WTC11 (cell line): ENCODE measurements at regions of chr19 and their contacts with region 1.

Region 1: GRCh38 chr19:54023191-54023590 is 31.8 kb downstream of the CACNG6 start:
- DNase-seq: no peak
- ATAC-seq: no peak
- H3K4me3 Mint-ChIP-seq: no peak overlapping the region
- H3K27ac Mint-ChIP-seq: no peak overlapping the region
- H3K4me1 Mint-ChIP-seq: peaks cover 14% of the 10 kb centered on the region
- H3K27me3 Mint-ChIP-seq: peaks cover 14% of the 10 kb centered on the region
- CTCF ChIP-seq: no peak

Region 2: GRCh38 chr19:53844849-53845246 is 178.3 kb before region 1 on chr19:
- CTCF ChIA-PET with region 1: interaction called, 15 read pairs
- POLR2A ChIA-PET with region 1: no interaction called
- DNase-seq: no peak
- ATAC-seq: no peak
- H3K4me3 Mint-ChIP-seq: no peak overlapping the region
- H3K27ac Mint-ChIP-seq: no peak overlapping the region
- H3K4me1 Mint-ChIP-seq: peaks cover 8% of the 10 kb centered on the region
- H3K27me3 Mint-ChIP-seq: peaks cover 9% of the 10 kb centered on the region; the same call in 1 of the 2 replicates
- CTCF ChIP-seq: no peak

Region 3: DNA sequence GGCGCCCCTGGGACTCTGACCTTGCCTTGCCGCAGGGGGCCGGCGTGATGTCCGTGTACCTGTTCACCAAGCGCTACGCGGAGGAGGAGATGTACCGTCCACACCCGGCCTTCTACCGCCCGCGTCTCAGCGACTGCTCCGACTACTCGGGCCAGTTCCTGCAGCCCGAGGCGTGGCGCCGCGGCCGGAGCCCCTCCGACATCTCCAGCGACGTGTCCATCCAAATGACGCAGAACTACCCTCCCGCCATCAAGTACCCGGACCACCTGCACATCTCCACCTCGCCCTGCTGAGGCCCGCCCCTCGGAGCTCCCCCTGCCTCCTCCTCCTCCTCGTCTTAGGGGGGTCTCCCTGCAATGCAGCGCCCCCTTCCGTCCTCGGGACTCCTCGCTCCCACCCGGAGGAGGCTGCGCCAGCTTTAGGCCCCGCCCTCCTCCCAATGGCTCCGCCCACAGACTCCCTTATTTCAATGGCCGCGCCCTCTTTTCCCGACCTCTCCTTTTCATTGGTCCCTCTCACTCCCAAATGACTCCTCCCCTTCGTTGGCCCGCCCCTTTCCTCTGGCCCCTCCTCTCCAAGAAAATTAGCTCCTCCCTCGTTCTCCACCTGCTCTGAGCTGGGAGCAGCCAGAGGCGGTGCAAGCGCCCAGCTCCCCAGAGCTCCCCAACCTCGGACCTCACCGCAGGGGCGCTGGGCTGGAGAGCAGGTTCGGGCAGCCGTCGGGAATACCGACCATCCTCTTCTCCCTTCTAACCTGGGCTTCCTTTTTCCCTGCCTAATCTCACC is 81.0 kb before region 1 on chr19:
- CTCF ChIA-PET with region 1: interaction called, 54 read pairs
- POLR2A ChIA-PET with region 1: interaction called, 7 read pairs
- DNase-seq: peak; percentile 100
- ATAC-seq: peak; percentile 92
- H3K4me3 Mint-ChIP-seq: peak overlapping the region; percentile 95
- H3K27ac Mint-ChIP-seq: 0 out of 2 replicates have a peak overlapping the region, but pooled peaks have one; percentile 83
- H3K4me1 Mint-ChIP-seq: peaks cover 32% of the 10 kb centered on the region
- H3K27me3 Mint-ChIP-seq: no peaks in the 10 kb centered on the region; the same call in 1 of the 2 replicates
- CTCF ChIP-seq: peak; percentile 88

Region 4: DNA sequence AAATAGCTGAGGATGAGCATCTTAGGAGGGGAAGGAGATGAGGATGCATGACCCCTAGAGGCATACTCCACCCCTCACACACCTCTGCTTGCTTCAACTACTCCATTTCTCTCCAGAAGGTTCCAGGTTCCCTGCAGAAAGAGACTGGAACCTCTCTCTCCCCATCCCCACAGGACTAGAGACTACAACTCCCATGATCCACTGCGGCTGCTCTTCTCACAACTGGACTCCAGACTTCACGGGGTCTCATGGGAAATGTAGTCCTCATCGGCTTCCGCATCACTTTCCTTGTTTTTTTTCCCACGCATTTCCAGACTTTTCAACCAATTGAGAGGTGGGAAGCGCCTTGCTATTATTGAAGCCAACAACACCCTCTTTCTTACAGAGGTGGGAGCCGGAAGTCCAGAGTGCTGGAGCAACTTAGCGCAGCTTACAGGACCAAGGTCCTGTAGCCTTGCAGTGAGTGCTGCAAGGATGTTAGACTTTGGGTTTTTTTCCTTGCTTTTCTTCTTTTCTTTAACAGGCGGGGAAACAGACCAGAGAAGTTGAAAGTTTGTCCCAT is 45.7 kb before region 1 on chr19:
- CTCF ChIA-PET with region 1: interaction called, 48 read pairs
- POLR2A ChIA-PET with region 1: interaction called, 11 read pairs
- DNase-seq: peak; percentile 82
- ATAC-seq: 0 out of 2 replicates have a peak, but pooled peaks have one; percentile 1
- H3K4me3 Mint-ChIP-seq: peak overlapping the region; percentile 93
- H3K27ac Mint-ChIP-seq: peak overlapping the region; percentile 94
- H3K4me1 Mint-ChIP-seq: peaks cover 15% of the 10 kb centered on the region
- H3K27me3 Mint-ChIP-seq: peaks cover 4% of the 10 kb centered on the region; the same call in 1 of the 2 replicates
- CTCF ChIP-seq: no peak

Region 5: GRCh38 chr19:53998223-53998622 is 25.0 kb before region 1 on chr19:
- CTCF ChIA-PET with region 1: interaction called, 12 read pairs
- POLR2A ChIA-PET with region 1: no interaction called
- DNase-seq: no peak
- ATAC-seq: no peak
- H3K4me3 Mint-ChIP-seq: no peak overlapping the region
- H3K27ac Mint-ChIP-seq: no peak overlapping the region
- H3K4me1 Mint-ChIP-seq: peaks cover 11% of the 10 kb centered on the region
- H3K27me3 Mint-ChIP-seq: peaks cover 98% of the 10 kb centered on the region
- CTCF ChIP-seq: no peak

Region 6: GRCh38 chr19:54073829-54074228 is 50.6 kb after region 1 on chr19:
- CTCF ChIA-PET with region 1: no interaction called
- POLR2A ChIA-PET with region 1: no interaction called
- DNase-seq: no peak
- ATAC-seq: no peak
- H3K4me3 Mint-ChIP-seq: no peak overlapping the region
- H3K27ac Mint-ChIP-seq: no peak overlapping the region
- H3K4me1 Mint-ChIP-seq: no peaks in the 10 kb centered on the region
- H3K27me3 Mint-ChIP-seq: peaks cover 2% of the 10 kb centered on the region; the same call in 1 of the 2 replicates
- CTCF ChIP-seq: no peak

Region 7: GRCh38 chr19:54121259-54121658 is 98.1 kb after region 1 on chr19:
- CTCF ChIA-PET with region 1: no interaction called
- POLR2A ChIA-PET with region 1: no interaction called
- DNase-seq: no peak
- ATAC-seq: no peak
- H3K4me3 Mint-ChIP-seq: no peak overlapping the region
- H3K27ac Mint-ChIP-seq: no peak overlapping the region
- H3K4me1 Mint-ChIP-seq: peaks cover 8% of the 10 kb centered on the region
- H3K27me3 Mint-ChIP-seq: no peaks in the 10 kb centered on the region
- CTCF ChIP-seq: no peak